T-cell (primary cell): ENCODE measurements at regions of chr9 and their contacts with region 1.

Region 1: DNA sequence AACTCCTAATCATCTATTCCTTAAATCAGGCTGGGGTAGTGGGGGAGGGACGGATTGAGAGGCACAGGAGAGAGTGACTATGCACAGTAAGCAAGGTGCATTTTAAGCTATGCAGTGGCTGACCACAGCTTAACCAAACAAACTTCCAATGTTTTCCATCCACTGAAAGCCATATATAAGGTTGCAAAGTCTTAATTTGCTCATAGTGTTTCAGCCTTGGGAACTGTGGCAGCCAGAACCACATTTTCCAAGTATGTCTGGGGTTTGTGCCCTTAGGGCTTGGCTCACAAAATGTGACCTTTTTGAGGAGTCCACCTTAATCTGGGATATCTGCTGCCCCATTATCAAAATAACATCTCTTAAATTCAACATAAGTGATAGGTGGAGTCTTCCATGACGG is 14.9 kb upstream of the UBQLN1 start:
- DNase-seq: no peak
- ATAC-seq: no peak
- H3K4me3 ChIP-seq: no peak overlapping the region
- H3K4me3 Mint-ChIP-seq: no peak overlapping the region
- H3K27ac ChIP-seq: no peak overlapping the region
- H3K27ac Mint-ChIP-seq: no peak overlapping the region
- H3K4me1 ChIP-seq: no peaks in the 10 kb centered on the region
- H3K4me1 Mint-ChIP-seq: no peaks in the 10 kb centered on the region
- H3K27me3 ChIP-seq: no peaks in the 10 kb centered on the region
- H3K27me3 Mint-ChIP-seq: peaks cover 0 to 3% of the 10 kb centered on the region in 2 donors

Region 2: GRCh38 chr9:83754383-83754977 is 31.8 kb after region 1 on chr9:
- CTCF ChIA-PET with region 1: interaction called in 1 of 2 experiments, 4 read pairs
- POLR2A ChIA-PET with region 1: interaction called in 1 of 2 experiments, 10 read pairs
- DNase-seq: no peak
- ATAC-seq: no peak
- H3K4me3 ChIP-seq: no peak overlapping the region
- H3K4me3 Mint-ChIP-seq: no peak overlapping the region
- H3K27ac ChIP-seq: no peak overlapping the region
- H3K27ac Mint-ChIP-seq: no peak overlapping the region
- H3K4me1 ChIP-seq: no peaks in the 10 kb centered on the region
- H3K4me1 Mint-ChIP-seq: no peaks in the 10 kb centered on the region
- H3K27me3 ChIP-seq: no peaks in the 10 kb centered on the region
- H3K27me3 Mint-ChIP-seq: no peaks in the 10 kb centered on the region

Region 3: GRCh38 chr9:83765376-83765775 is 42.7 kb after region 1 on chr9:
- CTCF ChIA-PET with region 1: no interaction called
- POLR2A ChIA-PET with region 1: no interaction called
- DNase-seq: no peak
- ATAC-seq: no peak
- H3K4me3 ChIP-seq: no peak overlapping the region
- H3K4me3 Mint-ChIP-seq: no peak overlapping the region
- H3K27ac ChIP-seq: no peak overlapping the region
- H3K27ac Mint-ChIP-seq: no peak overlapping the region
- H3K4me1 ChIP-seq: no peaks in the 10 kb centered on the region
- H3K4me1 Mint-ChIP-seq: no peaks in the 10 kb centered on the region
- H3K27me3 ChIP-seq: no peaks in the 10 kb centered on the region
- H3K27me3 Mint-ChIP-seq: no peaks in the 10 kb centered on the region